IMR-90 (cell line): ENCODE measurements at regions of chr6 and their contacts with region 1.

Region 1: GRCh38 chr6:15691250-15691869 is 28.5 kb upstream of the DTNBP1 start:
- DNase-seq: peak; percentile 87
- ATAC-seq: peak; percentile 99
- H3K4me3 ChIP-seq: no peak overlapping the region
- H3K27ac ChIP-seq: no peak overlapping the region
- H3K4me1 ChIP-seq: no peaks in the 10 kb centered on the region
- H3K27me3 ChIP-seq: peaks cover 8% of the 10 kb centered on the region
- CTCF ChIP-seq: peak; percentile 100
- POLR2A ChIP-seq: no peak
- RAD21 ChIP-seq: peak; percentile 96

Region 2: DNA sequence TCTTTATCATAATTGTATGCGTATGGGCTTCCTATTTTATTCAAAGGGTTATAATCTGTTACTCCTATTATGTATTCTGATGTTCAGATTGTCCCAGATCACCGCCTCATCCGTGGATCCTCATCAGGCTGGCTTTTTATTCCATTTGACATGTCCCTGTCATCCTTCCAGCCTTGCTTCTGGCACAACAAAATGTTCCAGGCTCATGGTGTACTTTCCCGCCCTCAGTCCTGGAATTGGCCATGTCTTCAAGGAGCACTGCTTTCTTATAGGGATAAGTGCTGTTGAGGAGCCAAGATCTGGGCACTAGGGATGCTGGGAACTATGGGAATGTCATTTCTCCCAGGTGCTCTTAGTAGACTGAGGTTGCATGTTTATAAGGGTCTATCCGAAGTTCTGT is 237.7 kb before region 1 on chr6:
- CTCF ChIA-PET with region 1: no interaction called
- POLR2A ChIA-PET with region 1: no interaction called
- dilution Hi-C with region 1: no loop called
- in situ Hi-C with region 1: no loop called
- intact Hi-C with region 1: no loop called
- DNase-seq: no peak
- ATAC-seq: no peak
- H3K4me3 ChIP-seq: no peak overlapping the region
- H3K27ac ChIP-seq: no peak overlapping the region
- H3K4me1 ChIP-seq: peaks cover 6% of the 10 kb centered on the region
- H3K27me3 ChIP-seq: no peaks in the 10 kb centered on the region
- CTCF ChIP-seq: no peak
- POLR2A ChIP-seq: no peak
- RAD21 ChIP-seq: no peak

Region 3: DNA sequence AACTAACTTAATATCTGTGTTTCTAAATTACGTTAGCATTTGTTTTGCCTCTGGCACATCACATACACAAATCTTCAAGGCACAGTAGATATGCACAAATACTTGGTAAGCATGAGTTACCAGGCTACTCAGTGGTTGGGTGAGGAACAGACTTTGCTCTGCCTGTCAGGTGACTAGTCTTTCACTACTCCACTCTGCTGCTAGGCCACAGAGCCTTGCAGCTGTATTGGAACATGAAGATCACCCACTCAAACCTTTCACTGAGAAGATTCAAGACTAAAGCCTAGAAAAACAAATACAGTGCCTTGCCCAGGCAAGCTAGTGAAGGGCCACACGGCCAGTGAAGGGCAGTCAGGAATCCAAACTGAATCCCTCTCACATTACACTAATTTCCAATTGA is 75.6 kb before region 1 on chr6:
- CTCF ChIA-PET with region 1: no interaction called
- POLR2A ChIA-PET with region 1: no interaction called
- dilution Hi-C with region 1: no loop called
- in situ Hi-C with region 1: no loop called
- intact Hi-C with region 1: no loop called
- DNase-seq: peak; percentile 40
- ATAC-seq: peak; percentile 73
- H3K4me3 ChIP-seq: no peak overlapping the region
- H3K27ac ChIP-seq: no peak overlapping the region
- H3K4me1 ChIP-seq: peaks cover 2% of the 10 kb centered on the region; the same call in 1 of the 2 replicates
- H3K27me3 ChIP-seq: no peaks in the 10 kb centered on the region
- CTCF ChIP-seq: no peak
- POLR2A ChIP-seq: no peak
- RAD21 ChIP-seq: no peak

Region 4: DNA sequence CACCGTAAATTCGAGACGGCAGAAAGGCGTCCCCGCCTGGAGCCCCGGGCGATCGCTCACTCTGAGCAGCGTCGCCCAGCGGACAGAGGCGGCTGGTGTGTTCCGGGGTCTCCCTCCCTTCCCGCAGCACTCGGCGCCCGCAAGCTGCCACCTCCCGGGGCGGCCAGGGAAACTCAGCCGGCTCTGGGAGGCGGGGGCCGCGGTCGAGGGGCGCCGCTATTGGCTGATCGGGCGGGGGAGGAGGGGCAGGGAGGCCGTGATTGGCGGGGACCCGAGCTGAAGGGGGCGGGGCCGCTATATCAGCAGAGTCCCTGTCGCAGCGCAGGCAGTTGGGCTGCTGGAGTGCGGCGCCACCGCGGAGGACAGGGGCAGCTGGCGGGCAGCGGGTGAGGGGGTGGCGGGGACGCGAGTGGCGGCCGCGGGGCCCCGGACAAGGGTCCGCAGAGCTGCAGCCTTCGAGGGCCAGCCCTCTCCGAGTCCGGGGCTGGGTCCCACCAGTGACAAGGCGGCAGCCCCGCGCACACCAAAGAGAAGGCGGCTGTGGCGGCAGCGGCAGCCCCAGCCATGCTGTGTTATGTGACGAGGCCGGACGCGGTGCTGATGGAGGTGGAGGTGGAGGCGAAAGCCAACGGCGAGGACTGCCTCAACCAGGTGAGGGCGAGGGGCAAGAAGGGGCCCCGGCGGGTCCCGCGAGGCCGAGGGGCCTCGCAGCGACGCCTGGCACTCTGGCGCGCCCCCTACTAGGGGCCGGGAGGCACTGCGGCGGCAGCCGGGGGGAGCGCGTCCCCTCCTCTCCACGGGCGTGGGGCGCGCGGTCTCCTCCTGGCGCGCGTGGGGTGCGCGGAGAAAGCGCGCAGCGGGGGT is 437.6 kb after region 1 on chr6 and contains the start of gene MYLIP:
- CTCF ChIA-PET with region 1: interaction called, 7 read pairs
- POLR2A ChIA-PET with region 1: no interaction called
- dilution Hi-C with region 1: no loop called
- in situ Hi-C with region 1: no loop called
- intact Hi-C with region 1: loop called (anchors 1 kb)
- DNase-seq: peak; percentile 80
- ATAC-seq: peak; percentile 96
- H3K4me3 ChIP-seq: peak within 1 kb of the TSS; percentile 95
- H3K27ac ChIP-seq: peak within 1 kb of the TSS; percentile 88
- H3K4me1 ChIP-seq: peaks cover 6% of the 10 kb centered on the region
- H3K27me3 ChIP-seq: peaks cover 27% of the 10 kb centered on the region
- CTCF ChIP-seq: peak; percentile 52
- POLR2A ChIP-seq: peak; percentile 98
- RAD21 ChIP-seq: peak; percentile 42
- total RNA-seq, gene MYLIP: 3.2 and 3.6 TPM in 2 replicates

Region 5: DNA sequence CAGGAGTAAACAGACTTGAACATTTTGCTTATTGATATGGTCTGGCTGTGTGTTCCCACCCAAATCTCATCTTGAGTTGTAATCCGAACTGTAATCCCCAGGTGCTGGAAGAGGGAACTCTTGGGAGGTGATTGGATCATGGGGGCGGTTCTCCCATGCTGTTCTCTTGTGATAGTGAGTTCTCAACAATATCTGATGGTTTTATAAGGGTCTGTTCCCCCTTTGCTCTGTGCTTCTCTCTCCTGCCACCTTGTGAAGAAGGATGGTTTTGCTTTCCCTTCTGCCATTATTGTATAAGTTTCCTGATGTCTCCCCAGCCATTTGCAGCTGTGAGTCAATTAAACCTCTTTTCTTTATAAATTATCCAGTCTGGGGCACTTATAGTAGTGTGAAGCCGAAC is 477.5 kb after region 1 on chr6:
- CTCF ChIA-PET with region 1: interaction called, 8 read pairs
- POLR2A ChIA-PET with region 1: no interaction called
- dilution Hi-C with region 1: no loop called
- in situ Hi-C with region 1: no loop called
- intact Hi-C with region 1: loop called (anchors 1 kb)
- DNase-seq: peak; percentile 37
- ATAC-seq: peak; percentile 48
- H3K4me3 ChIP-seq: no peak overlapping the region
- H3K27ac ChIP-seq: no peak overlapping the region
- H3K4me1 ChIP-seq: no peaks in the 10 kb centered on the region; the same call in 1 of the 2 replicates
- H3K27me3 ChIP-seq: peaks cover 49% of the 10 kb centered on the region
- CTCF ChIP-seq: peak; percentile 58
- POLR2A ChIP-seq: no peak
- RAD21 ChIP-seq: peak; percentile 68

Region 6: DNA sequence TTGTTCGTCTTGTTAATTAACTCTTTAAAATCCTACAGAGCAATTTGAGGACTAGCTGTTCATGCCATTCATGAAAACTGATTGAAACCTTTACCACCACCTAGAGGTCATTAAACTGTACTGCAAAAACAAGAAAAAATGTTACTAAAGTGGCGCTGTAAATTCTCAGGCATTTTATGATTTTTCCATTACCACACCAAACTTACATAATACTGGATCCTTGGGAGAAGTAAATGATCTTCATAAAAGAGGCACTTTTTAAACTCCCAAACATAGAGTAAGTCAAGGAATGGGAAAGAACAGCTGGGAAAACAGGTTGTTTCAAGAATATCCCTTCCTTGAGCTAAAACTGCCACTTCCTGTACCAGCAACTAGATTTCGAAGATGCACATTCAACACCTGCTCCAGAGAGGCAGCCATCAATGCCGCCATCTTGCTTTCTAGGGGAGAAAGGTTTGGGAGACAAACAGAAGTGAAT is 491.9 kb after region 1 on chr6:
- CTCF ChIA-PET with region 1: interaction called, 12 read pairs
- POLR2A ChIA-PET with region 1: no interaction called
- dilution Hi-C with region 1: loop called (anchors 25 kb)
- in situ Hi-C with region 1: no loop called
- intact Hi-C with region 1: loop called (anchors 1 kb)
- DNase-seq: peak; percentile 56
- ATAC-seq: peak; percentile 79
- H3K4me3 ChIP-seq: no peak overlapping the region
- H3K27ac ChIP-seq: no peak overlapping the region
- H3K4me1 ChIP-seq: no peaks in the 10 kb centered on the region
- H3K27me3 ChIP-seq: peaks cover 42% of the 10 kb centered on the region
- CTCF ChIP-seq: peak; percentile 71
- POLR2A ChIP-seq: no peak
- RAD21 ChIP-seq: peak; percentile 69

Region 7: DNA sequence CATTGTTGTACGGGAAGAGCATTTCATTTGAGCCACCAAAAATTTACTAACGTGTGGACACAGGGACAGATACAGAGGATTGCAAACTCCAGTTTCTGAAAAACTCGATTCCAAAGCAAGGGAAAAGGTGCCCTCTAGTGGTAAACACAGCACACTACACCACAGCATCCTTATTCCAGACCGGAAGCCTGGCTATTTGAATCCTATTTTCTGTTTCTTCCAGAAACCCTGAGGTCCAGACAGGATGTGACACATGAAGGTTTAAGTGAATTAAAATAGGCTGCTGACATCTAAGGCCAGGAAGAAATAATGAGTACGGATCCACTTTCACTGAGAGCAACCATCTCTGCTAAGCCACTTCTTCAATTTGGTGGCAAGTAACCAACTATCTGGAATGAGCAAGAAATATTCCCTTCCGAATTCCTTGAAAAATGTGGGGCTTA is 515.3 kb after region 1 on chr6:
- CTCF ChIA-PET with region 1: interaction called, 9 read pairs
- POLR2A ChIA-PET with region 1: no interaction called
- dilution Hi-C with region 1: no loop called
- in situ Hi-C with region 1: loop called (anchors 5 kb)
- intact Hi-C with region 1: loop called (anchors 1 kb)
- DNase-seq: peak; percentile 87
- ATAC-seq: peak; percentile 85
- H3K4me3 ChIP-seq: no peak overlapping the region
- H3K27ac ChIP-seq: no peak overlapping the region
- H3K4me1 ChIP-seq: 0 out of 2 replicates have a peak, but pooled peaks cover 4% of the 10 kb centered on the region
- H3K27me3 ChIP-seq: peaks cover 3% of the 10 kb centered on the region; the same call in 1 of the 2 replicates
- CTCF ChIP-seq: peak; percentile 98
- POLR2A ChIP-seq: no peak
- RAD21 ChIP-seq: peak; percentile 95